HepG2 (cell line): ENCODE measurements at regions of chr14 and their contacts with region 1.

Region 1: GRCh38 chr14:38605193-38606114 is 349.6 kb upstream of the CLEC14A start:
- DNase-seq: peak; percentile 79
- ATAC-seq: peak; percentile 83
- H3K4me3 ChIP-seq: peak overlapping the region in 2 of 3 experiments; percentile 1 to 11; a peak in 2 of 6 replicates
- H3K27ac ChIP-seq: peak overlapping the region; percentile 14
- H3K4me1 ChIP-seq: peaks cover 24% of the 10 kb centered on the region
- H3K27me3 ChIP-seq: no peaks in the 10 kb centered on the region
- CTCF ChIP-seq: peak; percentile 56
- EP300 ChIP-seq: peak in 1 of 2 experiments; percentile 92; a peak in 2 of 4 replicates
- POLR2A ChIP-seq: no peak
- RAD21 ChIP-seq: peak; percentile 10; the same call in 1 of the 2 replicates

Region 2: GRCh38 chr14:38248321-38249050 is 357.0 kb before region 1 on chr14:
- CTCF ChIA-PET with region 1: no interaction called
- POLR2A ChIA-PET with region 1: no interaction called
- in situ Hi-C with region 1: no loop called
- intact Hi-C with region 1: loop called (anchors 1 kb)
- DNase-seq: peak; percentile 28
- ATAC-seq: peak; percentile 98
- H3K4me3 ChIP-seq: no peak overlapping the region
- H3K27ac ChIP-seq: no peak overlapping the region
- H3K4me1 ChIP-seq: no peaks in the 10 kb centered on the region
- H3K27me3 ChIP-seq: no peaks in the 10 kb centered on the region
- CTCF ChIP-seq: peak; percentile 51
- EP300 ChIP-seq: no peak
- POLR2A ChIP-seq: no peak
- RAD21 ChIP-seq: no peak

Region 3: DNA sequence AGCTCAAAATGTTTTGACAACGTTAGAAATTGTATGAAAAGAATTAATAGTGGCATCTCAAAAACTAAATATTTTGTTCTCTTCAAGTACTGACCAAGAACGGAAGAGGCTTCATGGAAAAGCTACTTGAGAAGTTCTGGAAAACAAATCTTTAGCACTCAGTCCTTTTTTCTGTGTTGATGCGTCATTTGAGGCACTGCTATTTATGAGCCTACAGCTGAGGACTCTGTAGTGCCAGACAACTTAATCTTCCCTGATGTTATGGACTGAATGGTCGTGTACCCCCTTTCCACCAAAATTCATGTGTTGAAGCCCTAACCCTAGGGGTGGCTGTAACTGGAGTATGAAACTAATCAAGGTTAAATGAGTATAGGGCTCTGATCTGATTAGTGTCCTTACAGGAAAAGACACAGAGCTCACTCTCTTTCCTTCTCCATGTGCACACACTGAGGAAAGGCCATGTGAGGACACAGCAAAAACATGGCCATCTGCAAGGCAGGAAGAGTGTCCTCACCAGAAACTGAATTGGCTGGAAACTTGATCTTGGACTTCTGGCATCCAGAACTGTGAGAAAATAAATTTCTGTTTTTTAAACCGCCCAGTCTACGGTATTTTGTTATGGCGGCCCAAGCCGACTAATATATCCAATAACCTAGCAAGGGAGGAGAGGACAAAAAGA is 12.6 kb before region 1 on chr14:
- CTCF ChIA-PET with region 1: no interaction called
- POLR2A ChIA-PET with region 1: no interaction called
- in situ Hi-C with region 1: no loop called
- intact Hi-C with region 1: no loop called
- DNase-seq: no peak
- ATAC-seq: no peak
- H3K4me3 ChIP-seq: no peak overlapping the region
- H3K27ac ChIP-seq: no peak overlapping the region
- H3K4me1 ChIP-seq: no peaks in the 10 kb centered on the region
- H3K27me3 ChIP-seq: no peaks in the 10 kb centered on the region
- CTCF ChIP-seq: no peak
- EP300 ChIP-seq: no peak
- POLR2A ChIP-seq: no peak
- RAD21 ChIP-seq: no peak

Region 4: GRCh38 chr14:38721822-38722431 is 116.5 kb after region 1 on chr14:
- CTCF ChIA-PET with region 1: no interaction called
- POLR2A ChIA-PET with region 1: no interaction called
- in situ Hi-C with region 1: no loop called
- intact Hi-C with region 1: loop called (anchors 5 kb)
- DNase-seq: peak; percentile 77
- ATAC-seq: peak; percentile 98
- H3K4me3 ChIP-seq: no peak overlapping the region
- H3K27ac ChIP-seq: no peak overlapping the region
- H3K4me1 ChIP-seq: no peaks in the 10 kb centered on the region
- H3K27me3 ChIP-seq: no peaks in the 10 kb centered on the region
- CTCF ChIP-seq: peak; percentile 94
- EP300 ChIP-seq: no peak; a peak in 1 of 4 replicates
- POLR2A ChIP-seq: no peak
- RAD21 ChIP-seq: peak; percentile 79